WTC11 (cell line): ENCODE measurements at regions of chr19 and their contacts with region 1.

Region 1: DNA sequence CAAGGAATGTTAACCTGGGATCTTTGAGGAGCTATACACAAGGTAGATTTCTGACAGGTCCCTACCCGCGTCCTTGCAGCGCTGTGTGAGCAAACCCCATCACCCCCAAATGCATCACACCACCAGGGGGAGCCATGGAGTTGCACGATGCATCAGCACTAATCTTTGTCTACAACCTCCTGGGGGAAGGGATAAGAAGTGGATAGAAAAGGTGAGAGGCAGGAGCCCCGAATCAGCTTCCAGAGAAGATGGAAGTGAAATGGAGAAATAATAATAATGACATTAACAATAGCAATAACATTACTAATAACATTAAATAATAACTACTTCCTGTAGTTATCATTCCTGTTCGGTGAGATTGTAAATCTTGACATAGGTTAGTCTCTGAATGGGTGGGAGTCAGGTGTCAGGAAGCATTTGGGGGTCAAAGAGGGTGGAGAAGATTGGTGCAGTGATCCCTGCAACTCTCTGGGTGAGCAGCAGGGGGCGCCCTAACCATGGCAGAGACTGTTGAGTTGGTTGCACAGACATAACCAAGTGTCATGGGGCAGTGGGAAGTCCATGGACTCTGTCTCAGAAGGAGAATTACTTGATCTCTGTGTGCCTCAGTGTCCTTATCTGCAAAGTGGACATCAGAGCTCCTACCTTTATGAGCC is 16.5 kb downstream of the SIGLEC7 start:
- DNase-seq: peak; percentile 93
- ATAC-seq: peak; percentile 92
- H3K4me3 Mint-ChIP-seq: no peak overlapping the region
- H3K27ac Mint-ChIP-seq: no peak overlapping the region; the same call in 1 of the 2 replicates
- H3K4me1 Mint-ChIP-seq: peaks cover 11% of the 10 kb centered on the region
- H3K27me3 Mint-ChIP-seq: peaks cover 6% of the 10 kb centered on the region
- CTCF ChIP-seq: peak; percentile 96

Region 2: DNA sequence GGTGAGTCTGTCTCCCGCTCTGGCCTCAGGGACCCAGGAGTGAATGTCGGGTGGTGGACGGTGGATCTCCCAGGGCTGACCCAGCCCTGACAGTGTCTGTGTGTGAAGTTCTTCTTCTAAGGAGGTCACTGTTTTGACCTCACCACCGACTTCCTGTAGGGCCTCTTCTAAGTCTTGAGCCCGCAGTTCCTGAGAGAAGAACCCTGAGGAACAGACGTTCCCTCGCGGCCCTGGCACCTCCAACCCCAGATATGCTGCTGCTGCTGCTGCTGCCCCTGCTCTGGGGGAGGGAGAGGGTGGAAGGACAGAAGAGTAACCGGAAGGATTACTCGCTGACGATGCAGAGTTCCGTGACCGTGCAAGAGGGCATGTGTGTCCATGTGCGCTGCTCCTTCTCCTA is 16.5 kb before region 1 on chr19 and contains the start of gene SIGLEC7:
- CTCF ChIA-PET with region 1: interaction called, 11 read pairs
- POLR2A ChIA-PET with region 1: no interaction called
- DNase-seq: no peak
- ATAC-seq: no peak
- H3K4me3 Mint-ChIP-seq: no peak within 1 kb of the TSS
- H3K27ac Mint-ChIP-seq: no peak within 1 kb of the TSS
- H3K4me1 Mint-ChIP-seq: peaks cover 24% of the 10 kb centered on the region
- H3K27me3 Mint-ChIP-seq: peaks cover 11% of the 10 kb centered on the region
- CTCF ChIP-seq: no peak
- total RNA-seq, gene SIGLEC7: not detected in 3 replicates